PC-9 (cell line): ENCODE measurements at regions of chr14 and their contacts with region 1.

Region 1: GRCh38 chr14:32693114-32693513 is 245.6 kb upstream of the NPAS3 start:
- DNase-seq: peak in 1 of 2 experiments; percentile 5
- H3K4me3 ChIP-seq: no peak overlapping the region
- H3K27ac ChIP-seq: no peak overlapping the region
- H3K4me1 ChIP-seq: no peaks in the 10 kb centered on the region; the same call in 1 of the 2 replicates
- H3K27me3 ChIP-seq: no peaks in the 10 kb centered on the region
- CTCF ChIP-seq: no peak

Region 2: GRCh38 chr14:32457213-32457920 is 235.7 kb before region 1 on chr14:
- CTCF ChIA-PET with region 1: no interaction called
- POLR2A ChIA-PET with region 1: no interaction called
- intact Hi-C with region 1: no loop called
- DNase-seq: no peak
- H3K4me3 ChIP-seq: no peak overlapping the region
- H3K27ac ChIP-seq: no peak overlapping the region
- H3K4me1 ChIP-seq: no peaks in the 10 kb centered on the region
- H3K27me3 ChIP-seq: no peaks in the 10 kb centered on the region
- CTCF ChIP-seq: no peak

Region 3: GRCh38 chr14:32593290-32593942 is 99.7 kb before region 1 on chr14:
- CTCF ChIA-PET with region 1: no interaction called
- POLR2A ChIA-PET with region 1: no interaction called
- intact Hi-C with region 1: loop called (anchors 10 kb)
- DNase-seq: no peak
- H3K4me3 ChIP-seq: no peak overlapping the region
- H3K27ac ChIP-seq: no peak overlapping the region
- H3K4me1 ChIP-seq: no peaks in the 10 kb centered on the region
- H3K27me3 ChIP-seq: no peaks in the 10 kb centered on the region
- CTCF ChIP-seq: no peak

Region 4: GRCh38 chr14:32709027-32709426 is 15.9 kb after region 1 on chr14:
- CTCF ChIA-PET with region 1: no interaction called
- POLR2A ChIA-PET with region 1: no interaction called
- intact Hi-C with region 1: no loop called
- DNase-seq: no peak
- H3K4me3 ChIP-seq: no peak overlapping the region
- H3K27ac ChIP-seq: no peak overlapping the region
- H3K4me1 ChIP-seq: no peaks in the 10 kb centered on the region
- H3K27me3 ChIP-seq: no peaks in the 10 kb centered on the region
- CTCF ChIP-seq: no peak